ENCODE measurements at regions of chr12 and their contacts with region 1.

Region 1: GRCh38 chr12:98998697-98999299 is 353.7 kb downstream of the APAF1 start:
- DNase-seq: peak; percentile 79
- ATAC-seq: peak; percentile 88
- H3K4me3 ChIP-seq: no peak overlapping the region
- H3K27ac ChIP-seq: no peak overlapping the region
- H3K4me1 ChIP-seq: no peaks in the 10 kb centered on the region
- H3K27me3 ChIP-seq: peaks cover 23% of the 10 kb centered on the region
- CTCF ChIP-seq: peak; percentile 85

Region 2: GRCh38 chr12:98803468-98804209 is 195.2 kb before region 1 on chr12:
- CTCF ChIA-PET with region 1: no interaction called
- POLR2A ChIA-PET with region 1: no interaction called
- intact Hi-C with region 1: loop called (anchors 10 kb)
- DNase-seq: no peak
- ATAC-seq: no peak
- H3K4me3 ChIP-seq: no peak overlapping the region
- H3K27ac ChIP-seq: no peak overlapping the region
- H3K4me1 ChIP-seq: peaks cover 7% of the 10 kb centered on the region; the same call in 1 of the 2 replicates
- H3K27me3 ChIP-seq: peaks cover 13% of the 10 kb centered on the region; the same call in 1 of the 2 replicates
- CTCF ChIP-seq: peak; percentile 38; the same call in 1 of the 2 replicates

Region 3: GRCh38 chr12:98955277-98955676 is 43.5 kb before region 1 on chr12:
- CTCF ChIA-PET with region 1: no interaction called
- POLR2A ChIA-PET with region 1: no interaction called
- intact Hi-C with region 1: loop called (anchors 2 kb)
- DNase-seq: peak; percentile 65
- ATAC-seq: peak; percentile 65
- H3K4me3 ChIP-seq: no peak overlapping the region
- H3K27ac ChIP-seq: no peak overlapping the region
- H3K4me1 ChIP-seq: no peaks in the 10 kb centered on the region
- H3K27me3 ChIP-seq: 0 out of 2 replicates have a peak, but pooled peaks cover 7% of the 10 kb centered on the region
- CTCF ChIP-seq: peak; percentile 54